Heart right ventricle (tissue), 16 donors: ENCODE measurements at regions of chrX and their contacts with region 1.

Region 1: DNA sequence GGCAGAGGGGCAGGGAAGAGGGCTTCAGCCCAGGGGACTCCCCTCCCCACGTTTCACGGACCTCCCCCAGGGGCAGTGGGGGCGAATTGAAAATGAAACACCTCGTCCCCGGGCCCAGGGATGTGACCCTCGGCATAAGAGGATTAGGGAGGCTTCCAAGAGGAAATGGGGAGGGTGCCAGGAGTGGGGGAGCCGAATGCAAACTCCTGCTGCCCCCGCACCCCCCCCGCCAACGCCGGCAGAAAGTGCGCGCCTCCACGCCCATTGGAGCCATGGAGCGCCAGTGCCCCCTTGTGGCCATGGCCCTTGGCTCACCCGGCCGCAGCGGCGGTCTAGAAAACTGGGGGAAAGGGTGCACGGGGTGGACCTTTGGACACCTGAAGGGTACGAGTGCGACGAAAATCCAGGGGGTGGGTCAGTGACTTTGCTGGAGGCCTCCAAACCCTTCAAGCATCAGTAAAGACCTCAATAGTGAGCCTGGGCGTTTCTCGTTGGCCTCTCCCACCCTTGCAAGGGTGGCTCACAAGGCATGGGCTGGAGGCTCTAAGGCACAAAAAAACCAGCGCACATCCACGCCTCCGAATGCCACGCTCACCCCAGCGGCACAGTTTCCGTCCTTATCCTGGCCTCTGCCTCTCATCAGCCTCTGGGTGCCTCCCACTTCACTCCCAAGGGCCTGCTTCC is 120.8 kb upstream of the PJA1 start:
- DNase-seq: peak; percentile 49 to 71
- ATAC-seq: peak; percentile 72 to 89 (median 86)
- H3K4me3 ChIP-seq: peak overlapping the region; percentile 4 to 55 (median 45)
- H3K27ac ChIP-seq: peak overlapping the region in 3 of 10 donors; percentile 30 to 55 (median 31)
- H3K4me1 ChIP-seq: peaks cover 0 to 10% (median 5%) of the 10 kb centered on the region in 9 donors
- H3K27me3 ChIP-seq: peaks cover 0 to 36% (median 0%) of the 10 kb centered on the region in 7 donors
- CTCF ChIP-seq: peak; percentile 60 to 92 (median 83)

Region 2: GRCh38 chrX:68196939-68197791 is 1088.9 kb before region 1 on chrX:
- intact Hi-C with region 1: loop called in 1 of 10 experiments (anchors 10 kb)
- DNase-seq: peak in 1 of 2 donors; percentile 19
- ATAC-seq: peak in 3 of 8 donors; percentile 44 to 60 (median 44)
- H3K4me3 ChIP-seq: no peak overlapping the region
- H3K27ac ChIP-seq: no peak overlapping the region
- H3K4me1 ChIP-seq: peaks cover 0 to 12% (median 0%) of the 10 kb centered on the region in 9 donors
- H3K27me3 ChIP-seq: peaks cover 0 to 10% (median 0%) of the 10 kb centered on the region in 7 donors
- CTCF ChIP-seq: peak; percentile 42 to 77 (median 64)

Region 3: DNA sequence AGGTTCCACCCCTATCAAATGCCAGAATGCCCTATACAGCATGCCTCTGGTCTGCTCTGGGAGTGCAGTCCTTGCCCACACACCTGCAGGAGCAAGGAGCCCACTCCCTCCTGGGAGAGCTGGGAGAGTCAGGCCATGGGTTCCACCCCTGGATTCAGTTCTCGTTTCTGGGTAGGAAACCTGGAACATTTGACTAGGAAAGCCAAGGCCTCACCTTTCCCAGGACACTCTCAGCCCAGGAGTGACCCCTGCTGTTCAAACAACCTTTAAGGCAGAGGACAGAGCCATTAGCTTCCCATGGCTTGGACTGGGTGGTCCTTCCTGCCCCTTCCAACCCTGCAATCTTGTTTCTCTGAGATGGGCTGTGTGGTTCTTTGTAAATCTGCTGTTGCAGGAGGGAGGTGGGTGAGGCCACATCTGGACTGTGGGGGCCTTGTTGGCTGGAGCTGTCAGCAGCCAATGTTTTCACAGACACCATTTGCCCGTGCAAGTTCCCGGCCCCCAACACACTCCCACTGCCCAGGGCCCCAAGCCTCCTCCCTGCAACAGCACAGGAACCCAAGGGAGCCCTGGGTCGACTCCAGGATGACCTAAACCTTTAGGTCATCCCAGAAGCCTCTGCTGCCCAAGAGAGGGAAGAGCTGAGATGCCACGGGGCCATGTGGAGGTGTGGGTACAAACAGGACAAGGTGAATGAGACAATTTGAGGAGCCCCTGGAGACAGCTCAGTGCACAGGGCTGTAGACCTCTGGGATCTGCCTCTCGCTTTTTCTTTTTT is 225.2 kb before region 1 on chrX:
- intact Hi-C with region 1: loop called in 1 of 10 experiments (anchors 10 kb)
- DNase-seq: peak; percentile 22 to 60
- ATAC-seq: peak; percentile 79 to 89 (median 82)
- H3K4me3 ChIP-seq: no peak overlapping the region
- H3K27ac ChIP-seq: no peak overlapping the region
- H3K4me1 ChIP-seq: peaks cover 0 to 6% (median 0%) of the 10 kb centered on the region in 9 donors
- H3K27me3 ChIP-seq: peaks cover 0 to 8% (median 0%) of the 10 kb centered on the region in 7 donors
- CTCF ChIP-seq: peak in 8 of 9 donors; percentile 18 to 67 (median 56)

Region 4: DNA sequence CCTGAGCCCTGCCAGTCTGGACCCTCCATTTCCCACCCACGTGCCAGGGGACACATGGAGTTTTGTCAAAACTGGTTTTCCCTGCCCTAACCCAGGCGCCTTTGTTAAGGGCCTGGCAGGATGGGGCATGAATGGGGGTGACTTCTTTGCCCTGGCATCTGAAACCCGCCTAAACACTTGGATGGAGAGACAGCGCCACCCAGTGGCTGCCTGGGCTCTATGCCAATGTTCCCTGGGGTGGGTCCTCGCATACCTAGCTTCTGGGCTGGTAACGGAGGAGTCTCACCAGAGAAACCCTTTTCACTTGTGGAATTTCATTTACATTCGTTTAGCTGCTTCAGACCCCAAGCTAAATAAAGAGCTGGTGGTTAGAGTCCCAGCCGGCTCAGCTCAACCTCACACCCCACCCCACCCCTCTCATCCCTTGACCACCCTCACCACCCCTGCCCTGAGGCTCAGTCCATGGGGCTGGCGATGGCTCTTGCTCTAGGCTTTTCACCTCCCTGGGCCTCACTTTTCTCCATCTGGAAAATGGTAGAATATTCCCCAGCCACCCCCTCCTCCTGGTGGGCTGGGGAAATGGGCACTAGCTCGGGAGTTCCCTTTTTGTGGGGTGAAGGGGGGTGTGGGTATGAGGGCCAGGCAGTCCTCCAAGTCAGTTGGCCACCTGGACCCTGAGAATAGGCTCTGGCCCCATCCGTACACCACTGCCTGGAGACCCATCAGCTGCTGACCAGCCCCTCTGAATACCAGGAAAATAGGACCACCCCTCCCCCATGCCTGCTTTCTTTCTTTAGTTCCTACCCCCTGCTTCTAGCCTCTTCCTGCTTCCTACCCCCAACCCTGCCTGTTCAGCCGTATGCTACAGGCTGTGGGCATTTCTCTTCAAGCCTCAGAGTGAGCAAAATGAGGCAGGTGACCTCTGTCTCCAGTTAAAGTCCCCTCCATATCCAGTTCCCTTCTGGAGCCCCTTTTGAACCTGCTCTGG is 63.6 kb before region 1 on chrX:
- intact Hi-C with region 1: loop called in 3 of 10 experiments (anchors 5 to 10 kb)
- DNase-seq: peak; percentile 49 to 73
- ATAC-seq: peak; percentile 75 to 90 (median 80)
- H3K4me3 ChIP-seq: no peak overlapping the region
- H3K27ac ChIP-seq: no peak overlapping the region
- H3K4me1 ChIP-seq: peaks cover 0 to 7% (median 0%) of the 10 kb centered on the region in 9 donors
- H3K27me3 ChIP-seq: peaks cover 0 to 30% (median 0%) of the 10 kb centered on the region in 7 donors
- CTCF ChIP-seq: peak; percentile 49 to 80 (median 76)

Region 5: DNA sequence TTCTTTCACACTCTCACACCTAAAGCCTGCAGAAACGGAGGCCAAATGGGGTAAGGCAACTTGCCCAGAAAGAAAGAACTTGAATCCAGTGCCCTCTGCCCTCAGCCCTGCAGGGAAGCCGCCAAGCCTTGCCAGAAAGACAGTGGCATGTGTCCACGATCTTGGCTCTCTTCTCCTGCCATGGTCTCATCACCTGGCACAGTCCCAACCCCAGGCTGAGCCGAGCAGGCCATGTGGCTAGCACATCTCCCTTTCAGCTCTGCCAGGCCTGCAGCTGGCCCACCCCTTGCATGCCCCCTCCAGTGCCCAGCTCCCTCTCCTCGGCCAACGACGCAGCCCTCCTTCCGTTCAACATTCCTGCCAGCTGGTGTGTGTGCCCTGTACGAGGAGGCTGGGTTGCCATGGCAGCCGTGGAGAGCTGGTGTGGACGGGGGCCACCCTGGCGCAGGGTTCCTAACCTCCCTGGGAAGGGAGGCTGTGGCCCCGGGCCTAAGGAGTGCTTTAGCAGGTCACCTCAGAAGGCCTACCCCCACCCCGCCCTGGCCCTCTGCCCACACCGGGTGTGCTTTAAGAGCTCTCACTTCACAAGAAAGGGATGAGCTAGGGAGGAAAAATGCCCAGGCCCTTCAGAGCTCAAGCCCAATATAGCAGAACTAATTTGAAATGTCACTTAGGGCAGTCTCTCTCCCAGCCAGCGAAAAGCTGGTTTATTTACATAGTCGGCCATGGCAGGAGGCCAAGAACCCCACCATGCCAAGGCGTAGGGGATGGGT is 47.7 kb before region 1 on chrX:
- intact Hi-C with region 1: loop called in 3 of 10 experiments (anchors 5 to 10 kb)
- DNase-seq: peak; percentile 16 to 40
- ATAC-seq: peak; percentile 29 to 88 (median 78)
- H3K4me3 ChIP-seq: no peak overlapping the region
- H3K27ac ChIP-seq: peak overlapping the region in 5 of 10 donors; percentile 15 to 54 (median 30)
- H3K4me1 ChIP-seq: peaks cover 0 to 6% (median 0%) of the 10 kb centered on the region in 9 donors
- H3K27me3 ChIP-seq: peaks cover 0 to 42% (median 0%) of the 10 kb centered on the region in 7 donors
- CTCF ChIP-seq: no peak